Astrocyte of the cerebellum (primary cell): ENCODE measurements at regions of chr18 and their contacts with region 1.

Region 1: GRCh38 chr18:70428439-70428838 is 139.6 kb downstream of the SOCS6 start:
- DNase-seq: no peak
- H3K4me3 ChIP-seq: no peak overlapping the region
- CTCF ChIP-seq: no peak

Region 2: GRCh38 chr18:70205421-70206397 is 222.7 kb before region 1 on chr18 and contains the start of gene RTTN:
- in situ Hi-C with region 1: loop called (anchors 25 kb)
- DNase-seq: peak; percentile 89
- H3K4me3 ChIP-seq: peak within 1 kb of the TSS; percentile 91
- CTCF ChIP-seq: no peak